Common myeloid progenitor, CD34-positive (primary cell): ENCODE measurements at regions of chr6 and their contacts with region 1.

Region 1: DNA sequence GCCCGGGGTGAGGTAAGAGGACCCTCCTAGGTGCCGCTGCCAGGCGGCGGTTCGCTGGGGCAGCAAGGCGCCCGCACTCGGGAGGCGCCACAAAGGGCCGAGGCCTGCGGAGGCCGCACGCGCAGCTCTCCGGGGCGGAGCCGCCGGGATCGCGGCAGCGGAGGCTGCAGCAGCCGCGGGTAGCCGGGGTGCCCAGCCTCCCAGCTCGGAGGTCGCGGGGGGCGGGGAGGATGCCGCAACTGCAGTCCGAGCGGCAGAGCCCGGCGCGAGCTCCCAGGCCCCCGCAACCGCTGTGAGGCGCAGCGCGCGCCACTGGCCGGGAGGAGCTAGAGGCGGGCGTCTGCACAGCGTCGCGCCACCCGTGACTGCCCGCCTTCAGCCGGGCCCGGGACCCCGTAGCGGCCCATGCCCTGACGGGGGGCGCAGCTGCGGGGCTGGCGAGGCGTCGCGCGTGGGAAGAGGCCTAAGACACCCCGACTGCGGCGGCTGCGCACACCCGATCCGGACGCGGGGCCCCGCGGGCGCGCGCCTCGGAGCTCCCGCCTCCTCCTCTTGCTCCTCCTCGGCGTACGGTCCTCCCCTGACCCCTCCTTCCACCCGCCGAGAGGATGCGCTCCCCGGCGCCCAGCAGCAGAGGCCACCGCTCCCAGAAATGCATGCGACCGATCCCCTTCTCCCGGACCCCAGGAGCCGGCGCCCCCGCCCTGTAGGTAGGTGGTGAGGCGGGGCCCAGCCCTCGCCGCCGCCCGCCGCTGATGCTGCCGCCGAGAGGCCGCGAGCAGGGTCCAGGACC is at the start of gene NCOA7:
- DNase-seq: peak; percentile 72 to 90 (median 81)
- H3K4me3 ChIP-seq: peak within 1 kb of the TSS; percentile 88 to 99 (median 94)
- H3K27ac ChIP-seq: peak within 1 kb of the TSS; percentile 84 to 88
- H3K4me1 ChIP-seq: peaks cover 28 to 57% (median 43%) of the 10 kb centered on the region in 4 experiments
- H3K27me3 ChIP-seq: no peaks in the 10 kb centered on the region

Region 2: DNA sequence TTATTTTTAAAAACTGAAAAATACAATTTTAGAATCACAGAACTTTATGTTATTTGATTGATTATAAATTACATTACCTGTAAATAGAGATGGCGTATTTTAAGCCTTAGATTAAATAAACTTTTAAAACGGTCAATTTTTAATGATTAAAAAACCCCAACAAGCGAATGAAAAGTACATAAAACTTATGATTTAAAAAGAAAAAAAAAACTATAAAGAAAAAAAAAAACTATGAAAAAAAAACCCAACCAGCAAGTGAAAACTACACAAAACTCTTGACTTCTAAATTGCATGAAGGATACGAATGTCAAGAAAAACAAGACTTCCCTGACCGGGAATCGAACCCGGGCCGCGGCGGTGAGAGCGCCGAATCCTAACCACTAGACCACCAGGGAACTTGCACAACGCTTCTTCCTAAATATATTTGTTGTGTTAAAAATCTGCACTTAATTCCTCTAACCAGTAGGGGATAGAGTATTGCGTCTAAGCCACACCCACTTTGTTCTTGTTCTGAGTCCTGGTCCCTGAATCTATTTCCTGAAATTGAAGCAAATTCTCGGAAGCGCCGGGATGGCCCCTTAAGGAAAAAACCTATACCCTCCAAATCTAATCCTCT is 10.5 kb before region 1 on chr6:
- CTCF ChIA-PET with region 1: interaction called, 43 read pairs
- POLR2A ChIA-PET with region 1: interaction called, 5 read pairs
- DNase-seq: peak; percentile 91 to 95 (median 94)
- H3K4me3 ChIP-seq: peak overlapping the region in 6 of 7 experiments; percentile 80 to 100 (median 98)
- H3K27ac ChIP-seq: peak overlapping the region; percentile 87 to 94
- H3K4me1 ChIP-seq: peaks cover 3 to 20% (median 11%) of the 10 kb centered on the region in 4 experiments
- H3K27me3 ChIP-seq: no peaks in the 10 kb centered on the region

Region 3: DNA sequence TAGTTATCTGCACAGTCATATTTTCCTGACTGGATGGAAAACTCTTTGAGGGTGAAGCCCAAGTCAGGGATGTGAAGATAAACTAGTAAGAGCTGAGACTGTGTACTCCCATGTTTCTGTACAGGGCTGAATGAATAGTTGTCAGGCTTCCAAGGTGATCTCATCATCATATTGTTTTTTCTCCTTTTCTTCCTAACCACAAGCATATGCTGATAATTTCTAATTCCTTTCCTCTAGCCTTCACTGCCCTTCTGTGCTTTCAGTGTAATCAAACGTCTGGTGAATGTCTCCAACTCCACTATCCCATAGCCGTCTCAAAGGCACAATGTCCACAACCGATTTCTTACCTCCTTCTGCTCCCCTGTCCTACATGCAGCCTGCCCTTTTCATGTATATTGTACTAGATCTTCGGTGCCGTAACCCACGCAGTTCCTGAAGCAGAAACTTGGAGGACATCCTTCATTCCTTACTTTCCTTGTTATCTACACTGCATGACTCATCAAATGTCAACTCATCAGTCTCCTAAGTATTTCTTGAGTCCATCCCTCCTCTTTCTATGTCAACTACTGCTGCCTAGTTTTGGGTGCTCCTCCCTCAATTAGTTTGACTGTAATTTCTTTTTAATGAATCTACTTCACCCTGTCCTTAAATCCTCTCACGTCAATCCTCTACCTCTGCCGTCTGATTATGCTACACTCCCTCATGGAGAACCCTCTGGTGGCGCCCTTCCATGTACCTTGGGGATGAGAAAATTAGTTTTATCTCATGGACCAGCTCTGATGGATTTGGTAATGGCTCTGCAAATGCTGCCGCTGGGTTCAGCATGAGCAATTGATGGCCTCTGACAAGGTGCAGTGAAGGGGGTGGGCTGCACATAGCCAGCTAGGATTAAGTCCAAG is 22.1 kb after region 1 on chr6:
- CTCF ChIA-PET with region 1: interaction called, 55 read pairs
- POLR2A ChIA-PET with region 1: no interaction called
- DNase-seq: peak in 2 of 3 donors; percentile 51 to 65
- H3K4me3 ChIP-seq: peak overlapping the region in 3 of 7 experiments; percentile 3 to 15 (median 12)
- H3K27ac ChIP-seq: peak overlapping the region in 1 of 2 experiments; percentile 69
- H3K4me1 ChIP-seq: peaks cover 24 to 87% (median 54%) of the 10 kb centered on the region in 4 experiments
- H3K27me3 ChIP-seq: no peaks in the 10 kb centered on the region

Region 4: GRCh38 chr6:125858427-125859320 is 68.1 kb after region 1 on chr6:
- CTCF ChIA-PET with region 1: interaction called, 20 read pairs
- POLR2A ChIA-PET with region 1: no interaction called
- DNase-seq: peak; percentile 59 to 67 (median 66)
- H3K4me3 ChIP-seq: no peak overlapping the region
- H3K27ac ChIP-seq: no peak overlapping the region
- H3K4me1 ChIP-seq: peaks cover 1 to 3% (median 2%) of the 10 kb centered on the region in 4 experiments
- H3K27me3 ChIP-seq: no peaks in the 10 kb centered on the region

Region 5: GRCh38 chr6:125899726-125900182 is 109.2 kb after region 1 on chr6:
- CTCF ChIA-PET with region 1: interaction called, 37 read pairs
- POLR2A ChIA-PET with region 1: interaction called, 3 read pairs
- DNase-seq: no peak
- H3K4me3 ChIP-seq: no peak overlapping the region
- H3K27ac ChIP-seq: no peak overlapping the region
- H3K4me1 ChIP-seq: peaks cover 0 to 9% (median 6%) of the 10 kb centered on the region in 4 experiments
- H3K27me3 ChIP-seq: no peaks in the 10 kb centered on the region

Region 6: DNA sequence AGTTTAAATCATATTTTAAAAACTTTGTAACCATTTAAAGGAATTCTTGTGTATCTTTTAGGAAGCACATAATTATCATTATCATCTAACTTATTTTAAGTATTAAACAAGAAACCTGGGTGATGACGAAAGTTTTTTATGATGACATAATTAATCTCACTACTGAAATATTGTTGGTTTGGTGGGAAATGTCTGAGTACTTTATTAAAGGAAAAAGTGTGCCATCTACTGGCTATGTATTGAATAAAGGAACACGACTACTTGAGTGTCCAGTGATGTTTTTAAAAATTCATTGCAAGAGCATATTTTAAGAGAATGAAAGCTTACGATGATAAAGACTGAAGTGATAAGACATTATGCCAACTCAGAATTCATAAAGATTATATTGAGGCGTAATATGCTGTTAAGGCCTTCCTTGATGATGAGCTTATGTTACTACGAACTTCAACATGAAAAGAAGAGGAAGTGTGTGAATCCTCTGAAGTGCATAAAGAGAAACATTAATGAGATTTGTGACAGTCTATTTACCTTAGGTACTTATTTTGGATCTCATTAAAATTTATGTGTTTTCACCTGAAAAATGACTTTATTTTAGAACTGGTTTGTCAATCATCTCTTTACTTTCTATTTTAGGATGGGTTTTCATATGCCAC is 183.8 kb after region 1 on chr6:
- CTCF ChIA-PET with region 1: interaction called, 50 read pairs
- POLR2A ChIA-PET with region 1: no interaction called
- DNase-seq: peak; percentile 66 to 81 (median 79)
- H3K4me3 ChIP-seq: no peak overlapping the region
- H3K27ac ChIP-seq: no peak overlapping the region
- H3K4me1 ChIP-seq: peaks cover 0 to 2% (median 0%) of the 10 kb centered on the region in 4 experiments
- H3K27me3 ChIP-seq: no peaks in the 10 kb centered on the region